ENCODE measurements at regions of chr6 and their contacts with region 1.

Region 1: GRCh38 chr6:16332175-16332542 is 93.8 kb downstream of the GMPR start:
- DNase-seq: peak; percentile 88
- H3K4me3 ChIP-seq: no peak overlapping the region
- H3K27ac ChIP-seq: peak overlapping the region in 1 of 2 donors; percentile 21
- H3K4me1 ChIP-seq: peaks cover 30% of the 10 kb centered on the region
- H3K27me3 ChIP-seq: no peaks in the 10 kb centered on the region
- CTCF ChIP-seq: peak; percentile 93 to 96 (median 95)
- POLR2A ChIP-seq: no peak

Region 2: DNA sequence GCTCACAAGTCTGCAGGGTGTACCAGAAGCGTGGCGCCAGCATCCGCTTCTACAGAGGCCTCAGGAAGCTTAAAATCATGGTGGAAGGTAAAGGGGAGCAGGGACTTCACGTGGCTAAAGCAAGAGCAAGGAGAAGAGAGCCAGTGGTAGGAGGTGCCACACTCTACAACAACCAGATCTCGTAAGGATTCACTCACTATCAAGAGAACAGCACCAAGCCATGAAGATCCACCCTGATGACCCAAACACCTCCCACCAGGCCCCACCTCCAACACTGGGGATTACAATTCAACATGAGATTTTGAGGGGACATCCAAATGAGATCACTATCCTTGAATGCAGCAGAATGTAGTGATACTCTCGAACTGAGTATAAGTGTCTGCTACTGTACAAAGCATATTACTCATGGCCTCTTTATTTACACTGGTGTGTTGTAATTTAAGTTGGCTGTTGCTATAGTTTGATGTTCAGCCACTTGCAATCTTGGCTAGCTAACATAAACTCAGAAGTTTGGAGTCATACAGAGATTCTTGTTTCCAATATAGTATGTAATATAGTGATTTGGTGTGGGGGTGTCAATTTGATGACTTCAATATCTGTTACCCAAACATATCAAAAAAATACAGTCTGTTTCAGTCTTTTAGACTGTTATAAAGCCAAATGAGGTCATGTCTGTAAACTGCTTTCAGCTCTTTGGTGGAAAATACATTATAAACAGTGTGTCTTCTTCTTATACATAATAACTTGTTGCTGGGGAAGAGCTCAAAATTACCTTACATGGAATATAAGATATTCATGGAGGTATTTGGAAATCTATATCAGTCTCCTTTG is 242.7 kb before region 1 on chr6:
- intact Hi-C with region 1: no loop called
- DNase-seq: no peak
- H3K4me3 ChIP-seq: no peak overlapping the region
- H3K27ac ChIP-seq: no peak overlapping the region
- H3K4me1 ChIP-seq: no peaks in the 10 kb centered on the region
- H3K27me3 ChIP-seq: no peaks in the 10 kb centered on the region
- CTCF ChIP-seq: no peak
- POLR2A ChIP-seq: no peak

Region 3: DNA sequence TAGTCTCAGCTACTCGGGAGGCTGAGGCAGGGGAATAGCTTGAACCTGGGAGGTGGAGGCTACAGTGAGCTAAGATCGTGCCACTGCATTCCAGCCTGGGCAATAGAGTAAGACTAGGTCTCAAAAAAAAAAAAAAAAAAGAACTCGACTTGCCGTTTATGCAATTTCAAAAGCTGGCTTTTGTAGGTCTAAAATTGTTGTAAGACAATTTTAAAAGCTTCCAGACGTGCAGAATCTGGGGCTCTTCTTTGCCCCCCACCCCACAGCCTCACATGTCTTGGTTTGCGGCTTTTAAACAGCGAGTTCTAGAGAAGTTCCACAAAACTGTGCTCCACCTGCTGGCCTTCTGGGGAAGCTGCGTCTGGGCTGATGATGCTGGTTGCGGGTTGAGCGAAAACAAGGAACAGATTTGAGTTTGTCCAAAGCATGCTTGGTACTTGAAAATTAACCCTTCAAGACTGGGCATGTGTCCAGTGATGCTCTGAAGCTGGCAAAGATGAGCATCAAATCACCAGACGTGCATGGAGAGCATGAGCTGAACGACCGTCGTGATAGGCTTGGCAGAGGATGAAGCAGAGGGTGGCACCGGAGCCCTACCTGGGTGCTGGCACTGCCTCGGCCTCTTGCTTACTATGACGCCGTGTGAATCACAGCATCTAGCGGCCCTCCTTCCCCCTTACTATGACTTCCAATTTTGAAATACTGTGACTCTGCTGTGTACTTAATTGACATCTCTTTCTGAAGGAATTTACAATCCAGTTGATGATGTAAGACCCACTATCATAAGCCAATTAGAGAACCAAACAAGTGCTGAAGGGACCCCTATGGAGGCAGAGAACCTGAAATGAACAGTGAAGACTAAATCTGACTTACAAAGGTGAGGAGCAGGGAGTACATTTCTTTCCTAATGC is 77.6 kb after region 1 on chr6:
- intact Hi-C with region 1: loop called (anchors 10 kb)
- DNase-seq: peak; percentile 63
- H3K4me3 ChIP-seq: no peak overlapping the region
- H3K27ac ChIP-seq: no peak overlapping the region
- H3K4me1 ChIP-seq: peaks cover 7% of the 10 kb centered on the region
- H3K27me3 ChIP-seq: no peaks in the 10 kb centered on the region
- CTCF ChIP-seq: peak; percentile 62 to 74 (median 66)
- POLR2A ChIP-seq: no peak

Measured in testis (tissue), 5 donors.